ENCODE measurements at regions of chr2 and their contacts with region 1.

Region 1: GRCh38 chr2:8477552-8478470 is 204.0 kb upstream of the ID2 start:
- DNase-seq: no peak
- H3K4me3 Mint-ChIP-seq: peak overlapping the region; percentile 31
- H3K27ac Mint-ChIP-seq: peak overlapping the region; percentile 76
- H3K4me1 Mint-ChIP-seq: peaks cover 97% of the 10 kb centered on the region
- H3K27me3 Mint-ChIP-seq: no peaks in the 10 kb centered on the region

Region 2: GRCh38 chr2:8303322-8303832 is 174.4 kb before region 1 on chr2:
- intact Hi-C with region 1: no loop called
- DNase-seq: peak; percentile 77
- H3K4me3 Mint-ChIP-seq: peak overlapping the region; percentile 65
- H3K27ac Mint-ChIP-seq: peak overlapping the region; percentile 85
- H3K4me1 Mint-ChIP-seq: peaks cover 91% of the 10 kb centered on the region
- H3K27me3 Mint-ChIP-seq: peaks cover 7% of the 10 kb centered on the region

Region 3: GRCh38 chr2:8456151-8456845 is 21.5 kb before region 1 on chr2:
- intact Hi-C with region 1: loop called (anchors 2 kb)
- DNase-seq: peak; percentile 58
- H3K4me3 Mint-ChIP-seq: peak overlapping the region; percentile 66
- H3K27ac Mint-ChIP-seq: peak overlapping the region; percentile 88
- H3K4me1 Mint-ChIP-seq: peaks cover 56% of the 10 kb centered on the region
- H3K27me3 Mint-ChIP-seq: peaks cover 22% of the 10 kb centered on the region

Region 4: GRCh38 chr2:8488001-8488738 is 10.4 kb after region 1 on chr2:
- intact Hi-C with region 1: loop called (anchors 1 kb)
- DNase-seq: peak; percentile 57
- H3K4me3 Mint-ChIP-seq: peak overlapping the region; percentile 75
- H3K27ac Mint-ChIP-seq: peak overlapping the region; percentile 86
- H3K4me1 Mint-ChIP-seq: peaks cover 61% of the 10 kb centered on the region
- H3K27me3 Mint-ChIP-seq: no peaks in the 10 kb centered on the region

Region 5: GRCh38 chr2:8586457-8587051 is 108.7 kb after region 1 on chr2:
- intact Hi-C with region 1: loop called (anchors 5 kb)
- DNase-seq: no peak
- H3K4me3 Mint-ChIP-seq: peak overlapping the region; percentile 5
- H3K27ac Mint-ChIP-seq: no peak overlapping the region
- H3K4me1 Mint-ChIP-seq: peaks cover 48% of the 10 kb centered on the region
- H3K27me3 Mint-ChIP-seq: peaks cover 5% of the 10 kb centered on the region

Region 6: GRCh38 chr2:8606226-8606625 is 128.4 kb after region 1 on chr2:
- intact Hi-C with region 1: loop called (anchors 5 kb)
- DNase-seq: no peak
- H3K4me3 Mint-ChIP-seq: no peak overlapping the region
- H3K27ac Mint-ChIP-seq: no peak overlapping the region
- H3K4me1 Mint-ChIP-seq: peaks cover 44% of the 10 kb centered on the region
- H3K27me3 Mint-ChIP-seq: peaks cover 1% of the 10 kb centered on the region

Region 7: DNA sequence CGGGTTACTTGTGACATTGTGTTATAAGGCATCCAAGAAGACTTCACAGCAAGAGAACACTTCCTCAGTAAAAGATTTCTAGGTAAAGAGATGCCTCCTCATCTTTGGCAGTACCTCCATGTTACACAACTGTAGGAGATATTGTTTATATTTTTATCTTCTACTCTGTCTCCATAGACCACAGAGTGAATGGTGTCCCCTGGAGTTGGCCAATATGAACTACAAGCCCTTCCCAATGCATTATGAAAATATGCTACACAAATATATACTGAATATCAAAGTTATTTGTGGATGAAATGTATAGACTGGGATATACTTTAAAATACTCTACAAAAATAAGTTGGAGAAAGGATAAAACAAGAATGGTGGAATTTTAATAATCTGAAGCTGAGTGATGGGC is 479.0 kb after region 1 on chr2:
- intact Hi-C with region 1: no loop called
- DNase-seq: no peak
- H3K4me3 Mint-ChIP-seq: no peak overlapping the region
- H3K27ac Mint-ChIP-seq: no peak overlapping the region
- H3K4me1 Mint-ChIP-seq: no peaks in the 10 kb centered on the region
- H3K27me3 Mint-ChIP-seq: no peaks in the 10 kb centered on the region